ENCODE measurements at regions of chr17 and their contacts with region 1.

Region 1: DNA sequence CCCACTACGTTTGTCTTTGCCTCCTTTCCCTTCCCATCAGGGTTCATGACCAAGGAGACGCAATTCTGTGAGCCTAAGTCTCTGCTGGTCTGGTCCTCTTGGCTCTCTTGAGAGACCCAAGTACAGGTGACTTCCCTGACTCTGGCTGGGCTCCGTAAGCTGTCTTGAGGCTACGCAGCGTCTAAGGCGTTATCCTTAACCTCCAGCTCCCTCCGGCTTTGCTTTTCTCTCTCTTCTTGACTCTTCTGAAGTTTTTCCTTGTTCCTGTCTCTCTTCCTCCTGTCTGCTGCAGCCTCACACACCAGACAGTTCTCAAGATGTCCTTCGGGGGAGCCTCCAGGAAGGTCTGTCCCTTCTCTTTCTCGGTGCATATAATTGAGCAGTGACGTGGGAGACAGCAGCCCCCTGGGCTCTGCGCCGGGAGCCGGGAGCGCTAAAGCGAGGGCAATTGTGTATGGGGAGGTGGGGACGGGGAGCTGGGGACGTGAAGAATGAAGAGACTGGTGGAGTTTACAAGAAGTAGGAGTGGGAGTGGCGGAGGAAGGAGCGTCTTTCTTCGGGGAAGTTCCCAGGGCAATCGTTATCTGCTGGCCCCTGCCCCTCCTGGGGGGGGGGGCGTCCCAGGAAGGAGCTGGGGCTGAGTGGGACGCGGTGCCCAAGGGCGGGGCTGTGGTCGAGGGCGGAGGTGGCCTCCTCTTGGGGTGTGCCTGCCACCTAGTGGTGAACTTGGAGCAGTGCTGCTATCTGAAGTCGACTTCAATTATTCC is 6.9 kb upstream of the PIRT start:
- DNase-seq: peak; percentile 61 to 68
- H3K4me3 ChIP-seq: peak overlapping the region in 1 of 3 donors; percentile 25
- H3K27ac ChIP-seq: no peak overlapping the region
- H3K4me1 ChIP-seq: peaks cover 0 to 4% of the 10 kb centered on the region in 2 donors
- H3K27me3 ChIP-seq: no peaks in the 10 kb centered on the region
- CTCF ChIP-seq: peak; percentile 92 to 97 (median 94)
- POLR2A ChIP-seq: no peak

Region 2: DNA sequence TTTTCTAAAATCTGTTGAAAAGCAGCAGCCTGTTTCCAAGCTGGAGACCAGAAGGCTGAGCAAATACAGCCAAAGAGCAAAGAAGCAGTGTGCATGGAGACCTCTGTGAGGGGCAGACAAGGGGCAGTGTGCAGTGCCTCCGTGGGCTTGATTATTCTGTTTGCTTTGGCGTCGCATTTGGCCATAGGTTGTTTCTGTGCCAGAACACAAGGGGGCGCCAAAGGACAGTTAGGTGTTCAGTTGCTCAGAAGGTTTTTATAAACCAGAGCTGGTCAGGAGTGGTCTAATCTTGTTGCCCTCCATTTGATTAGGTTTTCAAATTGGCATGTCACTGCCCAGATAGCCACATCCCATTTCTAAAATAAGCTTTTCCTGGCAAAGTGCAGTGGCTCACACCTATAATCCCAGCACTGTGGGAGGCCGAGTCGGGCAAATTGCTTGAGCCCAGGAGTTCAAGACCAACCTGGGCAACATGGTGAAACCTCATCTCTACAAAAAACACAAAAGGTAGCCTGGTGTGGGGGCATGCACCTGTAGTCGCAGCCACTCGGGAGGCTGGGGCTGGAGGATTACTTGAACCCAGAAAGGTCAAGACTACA is 198.3 kb before region 1 on chr17:
- intact Hi-C with region 1: loop called (anchors 5 kb)
- DNase-seq: peak; percentile 69 to 80
- H3K4me3 ChIP-seq: no peak overlapping the region
- H3K27ac ChIP-seq: no peak overlapping the region
- H3K4me1 ChIP-seq: no peaks in the 10 kb centered on the region
- H3K27me3 ChIP-seq: no peaks in the 10 kb centered on the region
- CTCF ChIP-seq: peak; percentile 65 to 88 (median 78)
- POLR2A ChIP-seq: no peak

Region 3: GRCh38 chr17:10737168-10737622 is 107.6 kb before region 1 on chr17:
- intact Hi-C with region 1: loop called (anchors 5 kb)
- DNase-seq: peak; percentile 55 to 59
- H3K4me3 ChIP-seq: no peak overlapping the region
- H3K27ac ChIP-seq: no peak overlapping the region
- H3K4me1 ChIP-seq: no peaks in the 10 kb centered on the region
- H3K27me3 ChIP-seq: no peaks in the 10 kb centered on the region
- CTCF ChIP-seq: peak; percentile 52 to 85 (median 77)
- POLR2A ChIP-seq: no peak

Region 4: DNA sequence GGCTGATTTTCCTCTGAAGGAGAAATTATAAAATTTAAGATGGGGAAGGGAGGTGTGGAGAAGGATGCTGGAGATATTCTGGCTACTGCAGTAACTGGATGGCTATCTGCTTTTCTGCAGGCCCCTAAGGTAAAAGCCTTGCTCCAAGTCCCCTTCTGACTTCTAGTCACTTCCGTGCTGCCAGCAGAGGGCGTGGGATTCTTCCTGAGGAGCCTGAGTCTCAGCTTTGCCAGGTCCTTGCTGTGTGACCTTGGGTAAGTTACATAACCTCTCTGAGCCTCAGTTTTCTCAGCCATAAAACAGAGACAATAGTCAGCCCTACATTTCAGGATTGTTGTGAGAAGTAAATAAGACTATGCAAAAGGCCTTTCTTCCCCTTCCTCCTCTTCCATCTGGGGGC is 90.7 kb before region 1 on chr17:
- intact Hi-C with region 1: loop called (anchors 5 kb)
- DNase-seq: peak; percentile 30 to 55
- H3K4me3 ChIP-seq: no peak overlapping the region
- H3K27ac ChIP-seq: no peak overlapping the region
- H3K4me1 ChIP-seq: peaks cover 4 to 11% of the 10 kb centered on the region in 2 donors
- H3K27me3 ChIP-seq: no peaks in the 10 kb centered on the region
- CTCF ChIP-seq: peak in 2 of 6 experiments; percentile 24 to 31
- POLR2A ChIP-seq: no peak

Region 5: DNA sequence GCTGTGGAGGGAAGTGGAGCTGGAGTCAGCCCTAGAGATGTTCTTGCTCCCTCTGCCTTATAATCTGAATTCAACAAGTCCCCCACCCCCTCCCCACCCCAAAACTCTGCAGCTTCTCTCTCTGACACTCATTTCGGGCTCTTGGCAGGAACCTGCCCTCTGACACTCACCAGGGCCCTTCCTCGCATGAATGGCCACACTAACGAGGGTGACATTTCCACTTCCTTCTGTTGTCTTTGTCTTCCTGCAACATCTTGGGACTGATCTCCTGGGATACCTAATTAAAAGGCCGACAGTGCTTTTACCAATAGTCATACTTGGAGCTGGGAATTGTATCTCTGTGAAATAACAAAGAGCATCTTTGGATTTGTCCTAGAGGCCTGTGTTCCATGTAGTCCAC is 100.0 kb after region 1 on chr17:
- intact Hi-C with region 1: no loop called
- DNase-seq: no peak
- H3K4me3 ChIP-seq: no peak overlapping the region
- H3K27ac ChIP-seq: no peak overlapping the region
- H3K4me1 ChIP-seq: no peaks in the 10 kb centered on the region
- H3K27me3 ChIP-seq: no peaks in the 10 kb centered on the region
- CTCF ChIP-seq: no peak
- POLR2A ChIP-seq: no peak